Heart left ventricle (tissue), 16 donors: ENCODE measurements at regions of chr22 and their contacts with region 1.

Region 1: GRCh38 chr22:42868751-42869251 is 11.7 kb upstream of the ARFGAP3 start:
- DNase-seq: peak; percentile 67 to 83 (median 78)
- ATAC-seq: peak; percentile 62 to 80 (median 73)
- H3K4me3 ChIP-seq: no peak overlapping the region
- H3K27ac ChIP-seq: peak overlapping the region in 10 of 12 donors; percentile 11 to 80 (median 56)
- H3K4me1 ChIP-seq: peaks cover 0 to 22% (median 12%) of the 10 kb centered on the region in 12 donors
- H3K27me3 ChIP-seq: no peaks in the 10 kb centered on the region
- CTCF ChIP-seq: no peak
- POLR2A ChIP-seq: no peak

Region 2: GRCh38 chr22:42794551-42795510 is 74.0 kb before region 1 on chr22:
- intact Hi-C with region 1: no loop called
- DNase-seq: no peak
- ATAC-seq: no peak
- H3K4me3 ChIP-seq: no peak overlapping the region
- H3K27ac ChIP-seq: peak overlapping the region in 1 of 12 donors; percentile 75
- H3K4me1 ChIP-seq: peaks cover 0 to 35% (median 21%) of the 10 kb centered on the region in 12 donors
- H3K27me3 ChIP-seq: no peaks in the 10 kb centered on the region
- CTCF ChIP-seq: peak in 5 of 12 donors; percentile 2 to 22 (median 15)
- POLR2A ChIP-seq: no peak

Region 3: GRCh38 chr22:42814215-42814614 is 54.6 kb before region 1 on chr22:
- intact Hi-C with region 1: no loop called
- DNase-seq: no peak
- ATAC-seq: no peak
- H3K4me3 ChIP-seq: no peak overlapping the region
- H3K27ac ChIP-seq: no peak overlapping the region
- H3K4me1 ChIP-seq: peaks cover 0 to 12% (median 4%) of the 10 kb centered on the region in 12 donors
- H3K27me3 ChIP-seq: no peaks in the 10 kb centered on the region
- CTCF ChIP-seq: no peak
- POLR2A ChIP-seq: no peak

Region 4: GRCh38 chr22:42901790-42902508 is 33.1 kb after region 1 on chr22:
- intact Hi-C with region 1: loop called in 5 of 10 experiments (anchors 5 kb)
- DNase-seq: peak in 4 of 5 donors; percentile 63 to 86 (median 79)
- ATAC-seq: peak; percentile 67 to 86 (median 84)
- H3K4me3 ChIP-seq: no peak overlapping the region
- H3K27ac ChIP-seq: peak overlapping the region in 11 of 12 donors; percentile 50 to 87 (median 67)
- H3K4me1 ChIP-seq: peaks cover 7 to 82% (median 63%) of the 10 kb centered on the region in 12 donors
- H3K27me3 ChIP-seq: no peaks in the 10 kb centered on the region
- CTCF ChIP-seq: peak in 5 of 12 donors; percentile 5 to 28 (median 15)
- POLR2A ChIP-seq: no peak

Region 5: GRCh38 chr22:42959576-42960509 is 91.0 kb after region 1 on chr22:
- intact Hi-C with region 1: loop called in 5 of 10 experiments (anchors 5 to 10 kb)
- DNase-seq: peak; percentile 63 to 72 (median 67)
- ATAC-seq: peak; percentile 80 to 94 (median 93)
- H3K4me3 ChIP-seq: peak overlapping the region; percentile 15 to 63 (median 48)
- H3K27ac ChIP-seq: peak overlapping the region; percentile 11 to 82 (median 65)
- H3K4me1 ChIP-seq: peaks cover 11 to 85% (median 43%) of the 10 kb centered on the region in 12 donors
- H3K27me3 ChIP-seq: no peaks in the 10 kb centered on the region
- CTCF ChIP-seq: no peak
- POLR2A ChIP-seq: peak in 1 of 2 donors; percentile 31

Region 6: DNA sequence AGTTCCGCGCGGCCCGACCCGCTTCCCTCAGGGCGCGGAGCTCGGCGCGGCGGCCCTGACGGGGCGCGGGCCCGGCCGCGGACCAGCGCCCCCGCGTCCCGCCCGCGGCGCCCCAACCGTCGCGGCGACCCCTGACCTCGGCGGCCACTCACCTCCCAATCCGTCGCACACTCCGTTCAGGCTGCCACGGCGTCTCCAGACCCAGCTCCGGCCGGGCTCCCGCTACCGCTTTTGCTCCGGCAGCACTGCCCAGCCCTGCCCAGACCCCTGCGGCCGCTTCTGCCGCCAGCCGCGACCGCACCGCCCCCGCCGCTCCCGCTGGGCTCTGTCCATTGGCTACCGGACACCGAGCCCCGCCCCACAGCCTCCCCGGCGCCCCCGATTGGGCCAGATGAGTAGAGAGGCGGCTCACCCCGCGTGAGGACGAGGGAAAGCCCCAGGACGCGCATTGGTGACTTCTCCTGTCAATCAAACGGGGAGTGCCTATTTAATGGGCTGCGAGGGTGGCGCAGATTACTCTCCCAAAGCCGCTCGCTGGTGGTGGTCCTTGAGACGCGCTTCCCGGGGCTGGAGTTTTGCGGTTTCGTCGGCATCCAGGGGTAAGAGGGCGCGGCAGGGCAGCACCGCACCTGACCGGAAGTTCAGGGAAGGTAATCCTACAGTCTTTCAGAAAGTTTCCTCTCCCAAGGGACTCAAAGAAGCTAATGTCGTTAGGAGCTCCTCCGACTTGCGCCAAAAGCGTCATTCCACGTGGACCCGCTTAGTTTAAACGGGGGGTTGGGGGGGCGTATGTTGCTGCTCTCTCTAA is 146.3 kb after region 1 on chr22 and contains the start of gene PACSIN2:
- intact Hi-C with region 1: loop called in 1 of 10 experiments (anchors 10 kb)
- DNase-seq: peak; percentile 100
- ATAC-seq: peak; percentile 99 to 100 (median 100)
- H3K4me3 ChIP-seq: peak within 1 kb of the TSS; percentile 65 to 97 (median 79)
- H3K27ac ChIP-seq: peak within 1 kb of the TSS; percentile 26 to 82 (median 68)
- H3K4me1 ChIP-seq: peaks cover 0 to 37% (median 11%) of the 10 kb centered on the region in 12 donors
- H3K27me3 ChIP-seq: no peaks in the 10 kb centered on the region
- CTCF ChIP-seq: no peak
- POLR2A ChIP-seq: peak; percentile 79 to 97
- total RNA-seq, gene PACSIN2: 42.5 to 87.1 (median 59.3) TPM

Region 7: GRCh38 chr22:43088979-43089717 is 220.3 kb after region 1 on chr22 and contains the start of gene TTLL1:
- intact Hi-C with region 1: loop called in 5 of 10 experiments (anchors 2 to 10 kb)
- DNase-seq: peak; percentile 90 to 95 (median 93)
- ATAC-seq: peak; percentile 90 to 95 (median 93)
- H3K4me3 ChIP-seq: peak within 1 kb of the TSS; percentile 38 to 96 (median 84)
- H3K27ac ChIP-seq: peak within 1 kb of the TSS in 11 of 12 donors; percentile 47 to 77 (median 67)
- H3K4me1 ChIP-seq: peaks cover 0 to 30% (median 12%) of the 10 kb centered on the region in 12 donors
- H3K27me3 ChIP-seq: no peaks in the 10 kb centered on the region
- CTCF ChIP-seq: peak in 2 of 12 donors; percentile 14 to 15
- POLR2A ChIP-seq: peak in 1 of 2 donors; percentile 42
- total RNA-seq, gene TTLL1: 4.4 to 13.2 (median 8.4) TPM